Activated naive CD4-positive, alpha-beta T cell treated with anti-CD3 and anti-CD28 coated beads for 36 hours (primary cell): ENCODE measurements at regions of chr2 and their contacts with region 1.

Region 1: DNA sequence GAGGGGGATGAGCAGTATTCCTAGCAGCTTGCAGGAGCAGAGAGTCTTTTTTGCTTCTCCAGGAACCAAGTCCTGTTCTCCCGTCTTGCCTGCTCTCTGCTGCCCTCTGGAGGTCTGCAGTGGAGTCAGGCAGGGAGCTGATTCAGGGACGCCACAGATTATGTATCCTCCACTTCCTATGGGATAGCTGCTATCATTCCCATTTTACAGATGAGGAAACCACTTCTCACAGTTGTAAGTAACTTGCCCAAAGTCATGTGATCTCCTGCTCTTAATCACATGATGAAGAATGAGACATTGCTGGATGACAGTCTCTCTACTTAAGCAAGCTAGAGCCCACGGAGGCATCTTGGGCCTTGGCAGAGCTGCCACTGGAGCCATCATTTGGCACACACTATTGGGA is 8.3 kb downstream of the SLC4A5 start:
- DNase-seq: peak; percentile 86
- H3K4me3 Mint-ChIP-seq: no peak overlapping the region
- H3K27ac Mint-ChIP-seq: no peak overlapping the region
- H3K4me1 Mint-ChIP-seq: no peaks in the 10 kb centered on the region
- H3K27me3 Mint-ChIP-seq: no peaks in the 10 kb centered on the region

Region 2: GRCh38 chr2:74250189-74250631 is 84.7 kb before region 1 on chr2:
- CTCF ChIA-PET with region 1: interaction called, 163 read pairs
- intact Hi-C with region 1: loop called (anchors 1 kb)
- DNase-seq: peak; percentile 68
- H3K4me3 Mint-ChIP-seq: no peak overlapping the region
- H3K27ac Mint-ChIP-seq: no peak overlapping the region
- H3K4me1 Mint-ChIP-seq: peaks cover 2% of the 10 kb centered on the region
- H3K27me3 Mint-ChIP-seq: no peaks in the 10 kb centered on the region

Region 3: GRCh38 chr2:74267068-74267467 is 67.9 kb before region 1 on chr2:
- CTCF ChIA-PET with region 1: interaction called, 58 read pairs
- intact Hi-C with region 1: loop called (anchors 1 kb)
- DNase-seq: peak; percentile 82
- H3K4me3 Mint-ChIP-seq: no peak overlapping the region
- H3K27ac Mint-ChIP-seq: peak overlapping the region; percentile 53
- H3K4me1 Mint-ChIP-seq: peaks cover 12% of the 10 kb centered on the region
- H3K27me3 Mint-ChIP-seq: no peaks in the 10 kb centered on the region

Region 4: GRCh38 chr2:74290466-74291217 is 44.3 kb before region 1 on chr2:
- CTCF ChIA-PET with region 1: interaction called, 17 read pairs
- intact Hi-C with region 1: no loop called
- DNase-seq: peak; percentile 61
- H3K4me3 Mint-ChIP-seq: no peak overlapping the region
- H3K27ac Mint-ChIP-seq: peak overlapping the region; percentile 72
- H3K4me1 Mint-ChIP-seq: peaks cover 20% of the 10 kb centered on the region
- H3K27me3 Mint-ChIP-seq: no peaks in the 10 kb centered on the region

Region 5: DNA sequence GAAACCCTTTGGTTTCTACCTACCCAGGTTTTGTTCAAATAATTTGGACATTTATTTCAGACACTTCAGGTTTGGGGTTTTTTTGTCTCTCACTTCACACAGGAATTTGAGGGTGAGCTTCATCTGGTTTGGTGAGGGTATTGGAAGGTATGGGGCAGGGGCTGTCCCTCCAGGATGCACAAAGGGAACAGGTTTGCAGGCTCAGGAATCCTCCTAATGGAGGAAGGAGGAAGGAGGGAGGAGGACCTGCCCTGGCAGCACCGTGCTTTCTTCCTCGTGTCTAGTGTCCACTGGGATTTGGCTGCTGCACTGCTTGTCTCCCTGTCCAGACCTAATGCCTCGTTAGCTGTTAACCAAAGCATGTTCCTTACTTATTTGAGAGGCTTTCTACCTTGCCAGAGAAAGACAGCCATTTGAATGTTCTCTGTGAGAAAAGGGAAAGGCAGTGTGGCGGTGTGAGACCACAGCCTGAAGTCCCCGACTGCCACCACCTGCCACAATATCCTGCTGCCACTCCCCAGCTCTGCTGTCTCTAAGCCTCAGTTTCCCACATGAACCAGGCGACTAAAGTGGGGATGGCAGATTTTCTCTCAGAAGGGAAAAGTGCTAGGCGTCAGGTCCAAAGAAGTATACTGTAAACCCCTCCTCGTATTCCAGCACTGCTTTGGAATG is 10.5 kb after region 1 on chr2:
- CTCF ChIA-PET with region 1: interaction called, 14 read pairs
- intact Hi-C with region 1: no loop called
- DNase-seq: no peak
- H3K4me3 Mint-ChIP-seq: no peak overlapping the region
- H3K27ac Mint-ChIP-seq: no peak overlapping the region
- H3K4me1 Mint-ChIP-seq: no peaks in the 10 kb centered on the region
- H3K27me3 Mint-ChIP-seq: no peaks in the 10 kb centered on the region

Region 6: DNA sequence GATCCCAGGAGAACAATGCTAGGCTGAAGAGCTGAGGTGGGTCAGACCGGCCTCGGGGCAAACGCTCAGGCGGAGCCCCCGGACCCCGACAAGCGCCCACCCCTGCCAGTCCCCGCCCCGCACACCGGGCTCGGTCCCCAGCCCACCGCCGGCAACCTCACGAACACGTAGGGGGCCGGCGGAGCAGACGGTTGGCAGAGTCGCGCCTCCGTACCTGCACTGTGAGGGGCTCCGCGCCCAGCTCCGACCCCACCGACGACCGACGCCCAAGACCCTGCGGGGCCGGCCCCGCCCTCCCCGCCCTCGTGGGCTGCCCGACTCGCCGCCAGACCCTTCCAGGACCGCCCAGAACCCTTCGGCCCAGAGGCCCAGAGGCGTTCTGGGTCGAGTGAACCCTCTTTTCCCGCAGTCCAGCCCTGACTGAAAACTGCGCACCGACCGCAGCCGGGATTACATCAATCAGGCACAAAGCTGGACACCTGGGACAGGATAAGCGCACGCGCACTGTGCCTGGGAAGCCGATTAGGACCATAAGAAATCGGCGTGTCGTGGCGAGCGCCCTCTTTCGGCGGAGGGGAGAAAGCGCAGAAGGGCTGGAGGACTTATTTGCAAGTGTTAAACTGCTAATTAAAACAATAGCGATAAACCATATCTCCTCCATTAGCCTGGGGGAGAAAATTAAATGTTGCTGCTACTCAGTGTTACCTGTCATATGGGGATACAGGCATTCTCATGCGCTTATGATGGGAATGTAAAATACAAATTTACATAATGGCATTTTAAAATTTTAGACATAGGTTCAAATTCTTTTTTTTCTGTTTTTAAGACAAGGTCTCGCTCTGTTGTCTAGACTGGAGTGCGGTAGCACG is 56.9 kb after region 1 on chr2:
- CTCF ChIA-PET with region 1: interaction called, 23 read pairs
- intact Hi-C with region 1: loop called (anchors 2 kb)
- DNase-seq: peak; percentile 98
- H3K4me3 Mint-ChIP-seq: peak overlapping the region; percentile 92
- H3K27ac Mint-ChIP-seq: peak overlapping the region; percentile 96
- H3K4me1 Mint-ChIP-seq: peaks cover 4% of the 10 kb centered on the region
- H3K27me3 Mint-ChIP-seq: no peaks in the 10 kb centered on the region

Region 7: GRCh38 chr2:74529357-74530238 is 194.7 kb after region 1 on chr2 and contains the starts of genes AUP1 and HTRA2:
- CTCF ChIA-PET with region 1: interaction called, 3 read pairs
- intact Hi-C with region 1: loop called (anchors 5 kb)
- DNase-seq: peak; percentile 96
- H3K4me3 Mint-ChIP-seq: peak within 1 kb of the TSS; percentile 98
- H3K27ac Mint-ChIP-seq: peak within 1 kb of the TSS; percentile 91
- H3K4me1 Mint-ChIP-seq: peaks cover 40% of the 10 kb centered on the region
- H3K27me3 Mint-ChIP-seq: no peaks in the 10 kb centered on the region
- total RNA-seq, gene AUP1: 77.4 to 78.5 TPM
- total RNA-seq, gene HTRA2: 39.0 to 39.7 TPM

Region 8: DNA sequence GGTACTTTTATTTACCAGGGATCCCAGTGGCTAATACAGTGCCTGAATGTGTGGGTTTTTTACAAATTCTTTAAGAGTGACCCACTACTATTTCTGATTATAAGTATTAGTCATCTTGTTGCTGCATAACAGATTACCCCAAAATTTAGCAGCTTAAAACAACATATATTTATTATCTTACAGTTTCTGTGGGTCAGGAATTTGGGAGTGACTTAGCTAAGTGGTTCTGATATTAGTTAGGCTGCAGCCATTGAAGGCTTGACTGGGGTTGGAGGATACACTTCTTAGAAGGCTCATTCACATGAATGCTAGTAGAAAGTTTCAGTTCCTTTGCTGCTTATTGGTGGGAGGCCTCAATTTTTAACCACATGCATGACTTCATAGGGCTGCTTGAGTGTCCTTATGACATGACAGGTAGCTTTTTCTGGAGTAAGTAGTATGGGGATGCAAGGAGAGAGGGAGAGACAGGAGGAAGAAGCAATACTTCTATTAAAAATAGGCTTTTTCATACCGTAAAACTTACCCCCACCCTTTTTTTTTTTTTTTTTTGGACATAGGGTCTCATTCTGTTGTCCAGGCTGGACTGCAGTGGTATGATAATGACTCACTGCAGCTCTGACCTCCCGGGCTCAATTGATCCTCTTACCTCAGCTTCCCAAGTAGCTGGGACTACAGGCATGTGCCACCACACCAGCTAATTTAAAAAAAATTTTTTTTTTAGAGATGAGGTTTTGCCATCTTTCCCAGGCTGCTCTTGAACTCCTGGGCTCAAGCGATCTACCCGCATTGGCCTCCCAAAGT is 610.3 kb after region 1 on chr2:
- CTCF ChIA-PET with region 1: no interaction called
- intact Hi-C with region 1: no loop called
- DNase-seq: no peak
- H3K4me3 Mint-ChIP-seq: no peak overlapping the region
- H3K27ac Mint-ChIP-seq: no peak overlapping the region
- H3K4me1 Mint-ChIP-seq: no peaks in the 10 kb centered on the region
- H3K27me3 Mint-ChIP-seq: no peaks in the 10 kb centered on the region